Activated B cell treated with CpG ODN at 0.5 μM for 24 hours (primary cell): ENCODE measurements at regions of chr6 and their contacts with region 1.

Region 1: GRCh38 chr6:99425647-99426453 is 742 bp upstream of the PNISR start:
- DNase-seq: peak; percentile 56
- ATAC-seq: peak; percentile 54
- H3K4me3 Mint-ChIP-seq: peak overlapping the region; percentile 99
- H3K27ac Mint-ChIP-seq: peak overlapping the region; percentile 100
- H3K4me1 Mint-ChIP-seq: peaks cover 52% of the 10 kb centered on the region
- H3K27me3 Mint-ChIP-seq: no peaks in the 10 kb centered on the region
- CTCF ChIP-seq: no peak

Region 2: GRCh38 chr6:99393698-99394531 is 31.9 kb before region 1 on chr6 and contains the start of gene COQ3:
- CTCF ChIA-PET with region 1: no interaction called
- POLR2A ChIA-PET with region 1: interaction called, 34 read pairs
- intact Hi-C with region 1: loop called (anchors 1 kb)
- DNase-seq: peak; percentile 71
- ATAC-seq: peak; percentile 79
- H3K4me3 Mint-ChIP-seq: peak within 1 kb of the TSS; percentile 97
- H3K27ac Mint-ChIP-seq: peak within 1 kb of the TSS; percentile 89
- H3K4me1 Mint-ChIP-seq: peaks cover 13% of the 10 kb centered on the region
- H3K27me3 Mint-ChIP-seq: no peaks in the 10 kb centered on the region
- CTCF ChIP-seq: no peak
- total RNA-seq, gene COQ3: 4.8 and 5.6 TPM in 2 replicates

Region 3: DNA sequence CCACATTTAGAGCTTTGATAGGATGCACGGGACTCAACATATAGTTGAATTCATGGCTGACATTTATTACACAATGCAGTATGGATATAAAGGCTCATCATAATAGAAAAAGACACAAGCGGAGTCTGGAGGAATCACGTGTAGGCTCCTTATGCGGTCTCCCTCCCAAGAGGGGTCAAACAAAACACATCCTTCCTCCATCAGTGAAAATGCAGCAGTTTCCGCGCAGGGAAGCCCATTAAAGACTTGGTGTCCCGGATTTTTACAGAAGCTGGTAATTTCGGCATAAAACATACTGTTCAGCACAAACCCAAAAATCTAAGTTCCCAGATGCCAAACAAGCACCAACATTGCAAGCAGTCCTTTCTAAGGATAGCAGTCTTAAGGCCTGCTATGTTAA is 88.2 kb after region 1 on chr6:
- CTCF ChIA-PET with region 1: no interaction called
- POLR2A ChIA-PET with region 1: interaction called, 17 read pairs
- intact Hi-C with region 1: loop called (anchors 1 kb)
- DNase-seq: no peak
- ATAC-seq: no peak
- H3K4me3 Mint-ChIP-seq: peak overlapping the region; percentile 89
- H3K27ac Mint-ChIP-seq: peak overlapping the region; percentile 84
- H3K4me1 Mint-ChIP-seq: peaks cover 34% of the 10 kb centered on the region
- H3K27me3 Mint-ChIP-seq: no peaks in the 10 kb centered on the region
- CTCF ChIP-seq: no peak

Region 4: GRCh38 chr6:99568103-99568933 is 142.5 kb after region 1 on chr6 and contains the start of gene CCNC:
- CTCF ChIA-PET with region 1: no interaction called
- POLR2A ChIA-PET with region 1: interaction called, 38 read pairs
- intact Hi-C with region 1: loop called (anchors 1 kb)
- DNase-seq: peak; percentile 82
- ATAC-seq: peak; percentile 96
- H3K4me3 Mint-ChIP-seq: peak within 1 kb of the TSS; percentile 99
- H3K27ac Mint-ChIP-seq: peak within 1 kb of the TSS; percentile 93
- H3K4me1 Mint-ChIP-seq: peaks cover 32% of the 10 kb centered on the region
- H3K27me3 Mint-ChIP-seq: no peaks in the 10 kb centered on the region
- CTCF ChIP-seq: no peak
- total RNA-seq, gene CCNC: 50.4 and 51.6 TPM in 2 replicates